CD4-positive, alpha-beta T cell (primary cell): ENCODE measurements at regions of chr18 and their contacts with region 1.

Region 1: GRCh38 chr18:62751341-62751821 is 36.0 kb downstream of the PHLPP1 start:
- DNase-seq: no peak
- ATAC-seq: no peak
- H3K4me3 ChIP-seq: no peak overlapping the region
- H3K4me3 Mint-ChIP-seq: no peak overlapping the region
- H3K27ac ChIP-seq: no peak overlapping the region
- H3K27ac Mint-ChIP-seq: no peak overlapping the region
- H3K4me1 ChIP-seq: no peaks in the 10 kb centered on the region
- H3K4me1 Mint-ChIP-seq: no peaks in the 10 kb centered on the region
- H3K27me3 ChIP-seq: no peaks in the 10 kb centered on the region
- H3K27me3 Mint-ChIP-seq: no peaks in the 10 kb centered on the region
- CTCF ChIP-seq: no peak

Region 2: GRCh38 chr18:62723455-62724281 is 27.7 kb before region 1 on chr18:
- CTCF ChIA-PET with region 1: no interaction called
- POLR2A ChIA-PET with region 1: no interaction called
- intact Hi-C with region 1: loop called in 1 of 2 experiments (anchors 1 kb)
- DNase-seq: no peak
- ATAC-seq: no peak
- H3K4me3 ChIP-seq: no peak overlapping the region
- H3K4me3 Mint-ChIP-seq: no peak overlapping the region
- H3K27ac ChIP-seq: no peak overlapping the region
- H3K27ac Mint-ChIP-seq: no peak overlapping the region
- H3K4me1 ChIP-seq: no peaks in the 10 kb centered on the region
- H3K4me1 Mint-ChIP-seq: peaks cover 9% of the 10 kb centered on the region
- H3K27me3 ChIP-seq: no peaks in the 10 kb centered on the region
- H3K27me3 Mint-ChIP-seq: no peaks in the 10 kb centered on the region
- CTCF ChIP-seq: no peak